ENCODE measurements at regions of chr4 and their contacts with region 1.

Region 1: DNA sequence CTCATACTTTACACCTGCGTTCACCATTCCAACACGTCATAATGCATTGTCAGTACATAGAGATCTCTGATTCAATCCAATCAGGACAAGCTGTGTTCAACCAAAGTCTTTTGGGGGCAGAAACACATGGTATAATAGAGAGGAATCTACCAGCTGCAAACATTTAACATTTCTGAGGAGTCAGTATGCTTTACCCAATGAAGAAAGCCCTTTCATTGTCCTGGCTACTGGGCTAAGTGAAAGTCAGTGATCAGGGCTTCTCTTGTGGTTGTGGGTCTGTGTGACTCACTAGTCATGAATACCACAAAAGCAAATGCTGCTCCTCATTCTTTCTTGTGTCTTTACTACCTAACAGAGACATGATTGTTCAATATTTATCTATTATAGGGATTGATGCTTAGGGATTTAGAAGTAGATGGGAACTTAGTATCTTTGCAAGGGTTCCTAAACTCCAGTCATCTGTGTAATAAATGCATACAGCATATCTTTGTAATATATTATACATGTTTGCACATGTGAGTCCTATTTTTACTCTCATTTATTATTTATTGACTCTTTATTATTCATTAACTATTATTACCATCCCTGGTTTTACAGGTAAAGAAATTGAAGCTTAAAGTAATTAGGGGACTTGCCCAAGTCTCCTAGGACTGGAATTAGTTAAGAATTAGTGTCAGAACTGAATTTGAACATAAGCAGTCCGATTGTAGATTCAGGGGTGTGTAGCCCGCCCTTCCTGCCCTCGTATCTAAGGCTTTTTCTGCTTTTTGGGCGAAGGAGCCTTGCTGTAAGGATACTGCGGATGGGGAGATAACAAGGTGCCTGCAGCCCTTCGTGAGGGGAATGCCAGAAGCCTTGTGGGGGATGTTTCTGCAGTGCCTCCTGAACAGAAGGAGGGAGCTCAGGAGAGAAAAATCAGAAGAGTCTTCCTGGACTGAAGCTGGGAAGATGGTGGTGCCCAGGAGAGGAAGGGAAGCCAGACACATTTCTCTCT is 353.1 kb upstream of the BOD1L1 start:
- DNase-seq: no peak
- H3K4me3 ChIP-seq: no peak overlapping the region
- CTCF ChIP-seq: no peak
- POLR2A ChIP-seq: no peak

Region 2: DNA sequence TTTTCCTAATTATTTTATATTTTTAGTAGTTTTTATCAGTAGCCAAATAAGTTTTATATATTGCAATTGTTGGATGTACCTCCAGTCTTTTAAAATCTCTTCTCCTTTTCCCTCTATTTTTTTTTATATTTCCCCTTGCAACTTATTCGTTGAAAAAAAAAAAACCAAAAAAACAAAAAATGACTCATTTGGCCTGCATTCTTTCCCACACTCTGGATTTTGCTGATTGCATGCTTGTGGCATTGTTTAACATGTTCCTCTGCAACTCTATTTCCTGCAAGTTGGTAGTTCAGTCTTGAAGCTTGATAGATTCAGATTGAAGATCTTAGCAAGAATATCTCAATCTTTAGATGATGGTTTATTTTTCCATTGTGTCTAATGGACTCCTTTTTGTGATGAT is 92.5 kb before region 1 on chr4:
- intact Hi-C with region 1: no loop called
- DNase-seq: no peak
- H3K4me3 ChIP-seq: no peak overlapping the region
- CTCF ChIP-seq: no peak
- POLR2A ChIP-seq: no peak

Region 3: GRCh38 chr4:13918110-13918509 is 62.5 kb before region 1 on chr4:
- intact Hi-C with region 1: loop called (anchors 2 kb)
- DNase-seq: peak in 1 of 2 donors; percentile 33
- H3K4me3 ChIP-seq: no peak overlapping the region
- CTCF ChIP-seq: no peak
- POLR2A ChIP-seq: no peak

Region 4: GRCh38 chr4:14269824-14270223 is 289.2 kb after region 1 on chr4:
- intact Hi-C with region 1: no loop called
- DNase-seq: peak in 1 of 2 donors; percentile 37
- H3K4me3 ChIP-seq: no peak overlapping the region
- CTCF ChIP-seq: no peak
- POLR2A ChIP-seq: no peak

Region 5: GRCh38 chr4:14284018-14284417 is 303.4 kb after region 1 on chr4:
- intact Hi-C with region 1: no loop called
- DNase-seq: no peak
- H3K4me3 ChIP-seq: no peak overlapping the region
- CTCF ChIP-seq: no peak
- POLR2A ChIP-seq: no peak